ENCODE measurements at regions of chr3 and their contacts with region 1.

Region 1: DNA sequence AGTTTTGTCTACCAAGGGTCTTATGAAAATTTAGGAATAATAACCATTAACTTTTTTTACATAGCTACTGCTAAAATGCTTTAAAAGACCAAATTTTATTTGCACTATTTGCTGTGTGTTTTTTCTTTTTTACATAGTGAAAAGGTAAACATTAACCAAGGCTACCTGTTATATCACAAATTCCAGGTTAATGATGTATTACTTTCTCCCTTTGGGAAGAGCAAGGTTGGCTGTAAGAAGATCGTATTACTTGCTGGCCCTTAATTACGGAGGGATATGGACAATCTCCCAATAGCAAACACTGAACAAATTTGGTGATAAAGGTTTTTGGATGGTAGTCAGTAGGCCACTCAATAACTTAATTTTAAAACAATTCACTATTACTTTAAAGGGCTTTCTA is 22.4 kb downstream of the LRRC58 start:
- DNase-seq: no peak
- H3K4me3 ChIP-seq: no peak overlapping the region
- H3K4me3 Mint-ChIP-seq: no peak overlapping the region
- H3K27ac Mint-ChIP-seq: no peak overlapping the region
- H3K4me1 ChIP-seq: no peaks in the 10 kb centered on the region
- H3K4me1 Mint-ChIP-seq: no peaks in the 10 kb centered on the region
- H3K27me3 ChIP-seq: no peaks in the 10 kb centered on the region
- H3K27me3 Mint-ChIP-seq: no peaks in the 10 kb centered on the region
- CTCF ChIP-seq: no peak

Region 2: GRCh38 chr3:118544458-118544857 is 1782.3 kb before region 1 on chr3:
- CTCF ChIA-PET with region 1: no interaction called
- POLR2A ChIA-PET with region 1: no interaction called
- intact Hi-C with region 1: no loop called
- DNase-seq: no peak
- H3K4me3 ChIP-seq: no peak overlapping the region
- H3K4me3 Mint-ChIP-seq: no peak overlapping the region
- H3K27ac Mint-ChIP-seq: peak overlapping the region; percentile 22
- H3K4me1 ChIP-seq: peaks cover 34% of the 10 kb centered on the region
- H3K4me1 Mint-ChIP-seq: peaks cover 48% of the 10 kb centered on the region
- H3K27me3 ChIP-seq: no peaks in the 10 kb centered on the region
- H3K27me3 Mint-ChIP-seq: no peaks in the 10 kb centered on the region
- CTCF ChIP-seq: no peak

Region 3: DNA sequence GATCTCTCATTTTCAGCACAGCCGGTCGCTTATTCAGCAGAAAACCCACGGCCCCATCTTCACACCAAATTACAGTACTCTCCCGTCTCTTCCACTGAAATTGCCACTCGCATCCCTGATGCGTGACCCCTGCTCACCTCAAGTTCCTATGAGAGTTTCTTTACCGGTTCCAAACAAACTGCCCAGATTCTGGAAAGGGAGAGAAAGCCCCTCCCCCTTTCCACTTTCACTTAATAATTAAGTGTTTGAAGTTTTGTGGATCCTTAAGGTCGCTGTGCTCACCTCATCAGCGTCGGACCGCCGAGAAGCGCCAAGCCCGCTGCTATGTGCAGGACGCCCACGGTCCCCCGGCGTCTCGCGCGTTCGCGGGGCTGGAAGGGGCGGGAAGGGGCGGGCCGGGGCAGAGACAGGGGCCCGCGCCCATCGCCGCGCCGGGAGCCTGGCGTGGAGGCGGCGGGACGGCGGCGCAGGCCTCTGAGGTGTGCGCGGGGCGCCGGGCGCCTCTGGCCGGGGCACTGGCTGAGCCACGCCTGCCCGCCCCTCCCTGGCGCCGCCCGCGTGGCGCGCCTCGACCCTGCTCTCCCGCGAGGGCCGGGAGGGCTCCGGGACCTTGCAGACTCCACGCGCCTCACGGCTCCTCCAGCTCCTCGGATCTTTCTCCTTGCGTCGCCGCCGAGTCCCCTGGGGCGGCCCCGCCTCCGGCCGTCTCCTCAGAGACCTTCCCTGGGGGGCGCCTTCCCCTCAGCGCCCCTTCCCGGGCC is 41.9 kb before region 1 on chr3 and contains the start of gene GPR156:
- CTCF ChIA-PET with region 1: no interaction called
- POLR2A ChIA-PET with region 1: interaction called, 11 read pairs
- intact Hi-C with region 1: no loop called
- DNase-seq: peak; percentile 42 to 64
- H3K4me3 ChIP-seq: peak within 1 kb of the TSS; percentile 57
- H3K4me3 Mint-ChIP-seq: peak within 1 kb of the TSS; percentile 77
- H3K27ac Mint-ChIP-seq: no peak within 1 kb of the TSS
- H3K4me1 ChIP-seq: 0 out of 2 replicates have a peak, but pooled peaks cover 5% of the 10 kb centered on the region
- H3K4me1 Mint-ChIP-seq: no peaks in the 10 kb centered on the region
- H3K27me3 ChIP-seq: no peaks in the 10 kb centered on the region
- H3K27me3 Mint-ChIP-seq: peaks cover 2% of the 10 kb centered on the region
- CTCF ChIP-seq: no peak
- total RNA-seq, gene GPR156: 1.7 and 3.1 TPM in 2 replicates